GM10248 (cell line): ENCODE measurements at regions of chr22 and their contacts with region 1.

Region 1: GRCh38 chr22:31451709-31452571 is 37.7 kb downstream of the EIF4ENIF1 start:
- DNase-seq: peak; percentile 44
- CTCF ChIP-seq: peak; percentile 56

Region 2: DNA sequence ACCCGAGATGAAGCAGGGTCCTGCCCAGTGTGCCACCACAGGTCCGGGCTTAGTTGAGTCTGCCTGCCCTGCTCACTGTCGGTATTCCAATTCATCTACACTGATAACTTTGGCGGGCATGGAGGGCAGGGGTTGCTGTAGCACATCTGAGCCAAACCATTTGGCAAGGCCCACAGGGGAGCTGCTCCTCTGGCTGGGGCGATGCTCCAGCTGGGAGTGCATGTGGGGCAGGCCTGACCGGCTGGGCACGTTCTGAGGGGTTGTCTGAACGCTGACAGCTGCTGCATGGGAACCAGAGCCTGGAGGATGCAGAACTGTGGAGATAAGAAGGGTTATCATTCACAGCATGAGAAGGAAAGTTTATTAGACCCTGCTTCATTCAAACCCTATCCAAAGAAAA is 12.1 kb before region 1 on chr22:
- CTCF ChIA-PET with region 1: interaction called, 29 read pairs
- POLR2A ChIA-PET with region 1: no interaction called
- DNase-seq: no peak
- CTCF ChIP-seq: no peak

Region 3: GRCh38 chr22:31465307-31465706 is 13.4 kb after region 1 on chr22:
- CTCF ChIA-PET with region 1: interaction called, 10 read pairs
- POLR2A ChIA-PET with region 1: no interaction called
- DNase-seq: no peak
- CTCF ChIP-seq: no peak